ENCODE measurements at regions of chr1 and their contacts with region 1.

Region 1: DNA sequence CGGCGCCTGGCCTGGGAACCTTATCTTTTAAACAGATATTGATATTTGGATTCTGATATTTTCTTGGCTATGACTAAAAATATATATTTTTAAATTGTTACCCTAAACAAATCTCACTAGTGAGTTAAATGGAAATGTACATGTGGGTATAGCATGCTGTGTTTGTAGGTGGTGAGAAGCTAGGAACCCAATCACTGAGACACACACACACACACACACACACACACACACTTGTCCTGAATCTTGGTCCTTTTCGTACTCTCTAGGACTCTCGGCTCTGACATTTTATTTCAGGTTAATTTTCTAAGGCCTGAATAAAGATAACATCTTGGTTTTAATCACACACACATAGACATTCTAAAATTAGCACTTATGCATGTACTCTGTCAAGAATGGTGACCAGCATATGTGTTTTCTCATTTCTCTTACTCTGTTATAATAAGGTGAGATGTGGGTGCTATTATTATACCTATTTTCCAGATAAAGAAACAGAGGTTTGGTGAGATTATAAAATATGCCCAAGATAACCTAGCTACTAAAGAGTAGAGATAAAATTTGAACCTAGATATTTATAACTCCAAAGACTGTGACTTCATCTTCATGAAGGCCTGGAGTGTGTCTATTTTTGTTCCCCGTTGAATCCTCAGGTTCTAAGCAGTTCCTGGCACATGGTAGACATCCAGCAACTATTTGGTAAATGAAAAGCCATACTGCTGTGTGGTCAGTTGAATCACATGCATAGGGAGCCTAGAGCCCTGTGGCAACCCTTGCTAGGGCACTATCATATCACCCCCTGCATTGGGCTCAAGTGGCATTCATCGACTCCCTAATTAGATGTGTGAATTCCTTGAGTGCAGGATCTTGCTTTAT is 85.0 kb upstream of the RAB3GAP2 start:
- DNase-seq: no peak
- ATAC-seq: peak in 1 of 2 donors; percentile 75

Region 2: DNA sequence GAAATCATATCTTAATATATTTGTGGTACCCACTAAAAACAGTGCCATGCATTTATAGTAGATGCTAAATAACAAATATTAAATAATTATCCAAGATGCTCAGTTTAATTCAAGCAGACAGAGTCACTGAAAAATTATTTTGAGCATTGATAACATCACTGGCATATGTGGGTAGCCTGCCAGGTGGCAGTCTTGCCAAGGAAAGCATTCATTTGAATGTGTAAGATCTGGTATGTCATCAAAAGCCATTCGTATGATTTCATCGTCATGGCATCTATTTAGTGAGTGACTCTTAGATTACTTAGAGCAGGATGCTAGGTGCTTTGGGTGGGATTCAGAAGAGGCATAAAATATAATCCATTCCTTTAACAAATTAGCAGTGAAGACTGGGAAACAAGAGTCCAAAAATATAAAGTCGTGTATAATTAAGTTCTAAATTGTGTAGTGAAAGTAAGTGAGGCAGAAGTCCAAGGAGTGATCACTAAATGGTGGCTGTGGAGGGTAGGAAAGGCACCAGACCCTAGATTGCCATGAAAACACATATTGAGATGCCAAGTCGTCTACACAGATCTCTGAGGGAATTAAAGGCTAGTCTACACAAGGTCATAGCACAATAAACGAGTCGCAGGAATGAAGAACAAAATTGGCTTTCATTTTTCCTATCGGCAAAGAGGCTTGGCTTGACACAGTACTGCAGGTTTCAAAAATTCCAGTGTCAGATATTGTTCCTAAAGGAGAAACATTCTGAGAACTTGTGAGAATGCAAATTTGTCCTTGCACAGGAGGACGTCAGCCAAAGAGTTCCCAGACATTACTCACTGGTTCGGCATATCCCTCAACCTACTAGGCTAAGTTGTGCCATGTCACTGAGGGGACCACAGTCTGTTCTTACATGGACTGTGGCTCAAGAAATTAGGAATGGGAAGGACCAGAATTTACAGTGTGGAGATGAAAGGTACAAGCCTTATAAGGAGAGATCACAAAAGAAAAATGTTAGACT is 1052.7 kb before region 1 on chr1:
- intact Hi-C with region 1: no loop called
- DNase-seq: no peak
- ATAC-seq: peak; percentile 76 to 94

Region 3: DNA sequence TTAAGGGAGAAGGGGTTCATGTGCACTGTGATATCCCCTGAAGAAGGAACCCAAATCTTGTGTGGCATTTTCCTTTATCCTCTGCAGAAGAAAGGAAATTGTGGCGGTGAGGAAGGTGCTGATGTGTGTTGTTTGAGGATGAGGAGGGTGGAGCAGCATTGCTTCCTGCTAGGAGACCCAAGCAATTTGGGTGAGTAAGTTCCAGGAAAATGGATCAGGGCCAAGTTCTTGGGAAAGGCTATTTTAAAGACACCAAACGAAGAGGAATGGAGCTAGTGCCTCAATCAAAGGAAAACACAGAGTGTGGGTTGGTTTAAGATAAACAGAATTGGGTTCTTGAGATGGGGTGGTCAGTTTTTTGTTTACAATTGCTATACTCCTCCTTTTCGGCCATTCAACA is 84.0 kb after region 1 on chr1:
- intact Hi-C with region 1: no loop called
- DNase-seq: no peak
- ATAC-seq: no peak

Region 4: GRCh38 chr1:220786337-220787068 is 429.3 kb after region 1 on chr1 and contains the start of gene MTARC1:
- intact Hi-C with region 1: loop called in 1 of 2 experiments (anchors 5 kb)
- DNase-seq: peak; percentile 77
- ATAC-seq: peak; percentile 91
- total RNA-seq, gene MTARC1: 33.3 to 50.6 TPM